Activated naive CD4-positive, alpha-beta T cell treated with anti-CD3 and anti-CD28 coated beads, Interleukin-2, amount 10 ng/mL, durations not matched to agents 7 days and 5 days (primary cell): ENCODE measurements at regions of chr4 and their contacts with region 1.

Region 1: GRCh38 chr4:110516106-110516922 is 40.4 kb downstream of the ENPEP start:
- DNase-seq: peak; percentile 81
- H3K4me3 Mint-ChIP-seq: peak overlapping the region; percentile 93
- H3K27ac Mint-ChIP-seq: no peak overlapping the region
- H3K4me1 Mint-ChIP-seq: peaks cover 13% of the 10 kb centered on the region
- H3K27me3 Mint-ChIP-seq: no peaks in the 10 kb centered on the region

Region 2: DNA sequence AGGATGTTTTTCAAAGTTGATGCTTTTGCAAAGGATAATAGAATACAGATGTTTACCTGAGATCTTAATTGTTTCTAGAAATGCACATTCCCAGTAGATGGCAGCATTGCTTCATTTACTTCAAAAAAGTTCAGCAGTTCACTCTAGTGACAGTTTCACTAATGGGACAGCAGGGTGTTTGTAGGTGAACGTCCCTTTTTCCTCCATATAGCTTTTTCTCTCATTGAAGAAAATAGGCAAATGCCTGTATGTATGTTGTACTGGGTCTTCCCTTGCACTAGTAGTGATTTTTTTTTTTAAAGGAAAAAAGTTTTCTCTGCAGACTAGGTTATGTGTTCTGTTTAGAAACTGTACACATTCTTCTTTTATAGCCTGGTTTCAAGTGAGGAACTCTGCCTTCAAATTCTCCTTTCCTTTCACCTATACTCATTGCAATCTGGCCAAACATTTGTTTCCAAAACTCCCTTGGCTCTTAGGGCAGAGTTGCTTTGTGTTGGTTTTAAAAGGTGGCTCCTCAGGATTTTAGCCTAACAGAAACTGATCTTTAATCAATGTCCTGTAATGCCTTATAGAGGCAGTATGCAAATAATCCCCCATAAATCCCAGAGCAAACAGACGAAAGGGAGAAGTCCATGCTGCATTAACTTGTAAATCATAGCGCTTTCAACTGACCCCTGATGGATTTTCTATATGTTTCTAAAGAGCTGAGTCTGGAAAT is 517.3 kb before region 1 on chr4:
- CTCF ChIA-PET with region 1: interaction called, 486 read pairs
- DNase-seq: no peak
- H3K4me3 Mint-ChIP-seq: no peak overlapping the region
- H3K27ac Mint-ChIP-seq: no peak overlapping the region
- H3K4me1 Mint-ChIP-seq: peaks cover 25% of the 10 kb centered on the region
- H3K27me3 Mint-ChIP-seq: peaks cover 15% of the 10 kb centered on the region

Region 3: DNA sequence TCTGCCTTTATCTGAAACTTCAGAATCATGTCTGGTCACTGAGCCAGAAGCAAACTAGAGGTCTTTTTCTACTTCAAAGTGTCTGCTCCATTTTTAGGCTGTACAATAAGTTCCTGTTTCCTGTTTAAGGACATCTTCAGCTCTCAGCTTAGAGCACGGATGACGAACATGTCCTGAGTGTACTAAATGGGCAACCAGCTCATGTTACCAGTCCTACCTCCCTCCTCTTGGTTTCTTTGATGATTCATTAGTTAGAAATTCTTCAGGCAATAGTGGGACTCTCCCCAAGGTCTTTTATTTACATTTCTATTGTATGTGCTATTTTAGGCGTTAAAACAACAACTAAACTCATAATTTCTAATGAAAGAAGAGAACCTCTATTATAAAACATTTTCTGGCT is 17.6 kb after region 1 on chr4:
- CTCF ChIA-PET with region 1: interaction called, 10 read pairs
- DNase-seq: no peak
- H3K4me3 Mint-ChIP-seq: no peak overlapping the region
- H3K27ac Mint-ChIP-seq: no peak overlapping the region
- H3K4me1 Mint-ChIP-seq: peaks cover 6% of the 10 kb centered on the region
- H3K27me3 Mint-ChIP-seq: peaks cover 9% of the 10 kb centered on the region